OCI-LY7 (cell line): ENCODE measurements at regions of chr1 and their contacts with region 1.

Region 1: GRCh38 chr1:77143529-77144121 is 75.6 kb downstream of the PIGK start:
- DNase-seq: peak; percentile 25
- H3K4me3 ChIP-seq: no peak overlapping the region
- H3K27ac ChIP-seq: no peak overlapping the region
- H3K4me1 ChIP-seq: no peaks in the 10 kb centered on the region
- CTCF ChIP-seq: peak; percentile 80

Region 2: GRCh38 chr1:77060000-77060399 is 83.6 kb before region 1 on chr1:
- CTCF ChIA-PET with region 1: no interaction called
- POLR2A ChIA-PET with region 1: no interaction called
- intact Hi-C with region 1: no loop called
- DNase-seq: no peak
- H3K4me3 ChIP-seq: no peak overlapping the region
- H3K27ac ChIP-seq: no peak overlapping the region
- H3K4me1 ChIP-seq: no peaks in the 10 kb centered on the region
- CTCF ChIP-seq: no peak

Region 3: GRCh38 chr1:77170687-77171086 is 27.1 kb after region 1 on chr1:
- CTCF ChIA-PET with region 1: no interaction called
- POLR2A ChIA-PET with region 1: no interaction called
- intact Hi-C with region 1: no loop called
- DNase-seq: no peak
- H3K4me3 ChIP-seq: no peak overlapping the region
- H3K27ac ChIP-seq: no peak overlapping the region
- H3K4me1 ChIP-seq: no peaks in the 10 kb centered on the region
- CTCF ChIP-seq: no peak

Region 4: GRCh38 chr1:77533660-77534305 is 390.2 kb after region 1 on chr1:
- CTCF ChIA-PET with region 1: no interaction called
- POLR2A ChIA-PET with region 1: no interaction called
- intact Hi-C with region 1: loop called (anchors 1 kb)
- DNase-seq: peak; percentile 62
- H3K4me3 ChIP-seq: no peak overlapping the region
- H3K27ac ChIP-seq: no peak overlapping the region
- H3K4me1 ChIP-seq: no peaks in the 10 kb centered on the region
- CTCF ChIP-seq: peak; percentile 93